ENCODE measurements at regions of chr15 and their contacts with region 1.

Region 1: GRCh38 chr15:91151781-91152563 is 51.9 kb downstream of the SV2B start:
- DNase-seq: no peak
- H3K4me3 ChIP-seq: no peak overlapping the region
- H3K27ac ChIP-seq: no peak overlapping the region
- H3K4me1 ChIP-seq: no peaks in the 10 kb centered on the region
- CTCF ChIP-seq: no peak

Region 2: GRCh38 chr15:91135201-91136130 is 16.5 kb before region 1 on chr15:
- CTCF ChIA-PET with region 1: no interaction called
- POLR2A ChIA-PET with region 1: interaction called, 10 read pairs
- intact Hi-C with region 1: no loop called
- DNase-seq: no peak
- H3K4me3 ChIP-seq: no peak overlapping the region
- H3K27ac ChIP-seq: no peak overlapping the region
- H3K4me1 ChIP-seq: no peaks in the 10 kb centered on the region
- CTCF ChIP-seq: no peak

Measured in OCI-LY7 (cell line).